Mammary epithelial cell (primary cell): ENCODE measurements at regions of chr11 and their contacts with region 1.

Region 1: DNA sequence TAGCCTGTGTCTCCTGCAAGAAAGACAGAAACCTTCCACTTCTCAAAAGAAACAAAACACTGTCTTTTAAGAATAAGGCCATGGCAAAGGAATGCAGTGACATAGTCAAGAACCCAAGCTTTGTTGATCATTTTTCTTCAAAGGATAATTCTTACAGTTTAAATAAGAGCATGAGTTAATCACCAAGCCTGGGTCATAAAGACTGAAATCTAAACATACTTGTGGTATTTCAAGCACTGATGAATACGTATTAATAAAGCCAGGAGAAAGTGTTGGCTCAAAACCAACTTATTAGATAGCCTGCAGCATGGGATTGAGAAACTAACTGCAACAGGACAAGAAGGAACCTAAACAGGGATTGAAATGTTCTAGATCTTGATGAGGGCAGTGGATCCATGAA is 143.3 kb upstream of the MTNR1B start:
- DNase-seq: peak; percentile 81
- H3K4me3 ChIP-seq: no peak overlapping the region
- H3K27ac ChIP-seq: no peak overlapping the region
- H3K4me1 ChIP-seq: peaks cover 12% of the 10 kb centered on the region
- H3K27me3 ChIP-seq: peaks cover 30% of the 10 kb centered on the region
- CTCF ChIP-seq: no peak

Region 2: GRCh38 chr11:92697461-92698312 is 128.4 kb before region 1 on chr11:
- CTCF ChIA-PET with region 1: no interaction called
- dilution Hi-C with region 1: no loop called
- in situ Hi-C with region 1: no loop called
- intact Hi-C with region 1: no loop called
- DNase-seq: no peak
- H3K4me3 ChIP-seq: no peak overlapping the region
- H3K27ac ChIP-seq: no peak overlapping the region
- H3K4me1 ChIP-seq: peaks cover 22% of the 10 kb centered on the region
- H3K27me3 ChIP-seq: no peaks in the 10 kb centered on the region
- CTCF ChIP-seq: no peak

Region 3: GRCh38 chr11:92735039-92735438 is 91.1 kb before region 1 on chr11:
- CTCF ChIA-PET with region 1: no interaction called
- dilution Hi-C with region 1: no loop called
- in situ Hi-C with region 1: no loop called
- intact Hi-C with region 1: loop called (anchors 5 kb)
- DNase-seq: no peak
- H3K4me3 ChIP-seq: no peak overlapping the region
- H3K27ac ChIP-seq: no peak overlapping the region
- H3K4me1 ChIP-seq: no peaks in the 10 kb centered on the region
- H3K27me3 ChIP-seq: peaks cover 8% of the 10 kb centered on the region
- CTCF ChIP-seq: peak; percentile 55 to 65

Region 4: DNA sequence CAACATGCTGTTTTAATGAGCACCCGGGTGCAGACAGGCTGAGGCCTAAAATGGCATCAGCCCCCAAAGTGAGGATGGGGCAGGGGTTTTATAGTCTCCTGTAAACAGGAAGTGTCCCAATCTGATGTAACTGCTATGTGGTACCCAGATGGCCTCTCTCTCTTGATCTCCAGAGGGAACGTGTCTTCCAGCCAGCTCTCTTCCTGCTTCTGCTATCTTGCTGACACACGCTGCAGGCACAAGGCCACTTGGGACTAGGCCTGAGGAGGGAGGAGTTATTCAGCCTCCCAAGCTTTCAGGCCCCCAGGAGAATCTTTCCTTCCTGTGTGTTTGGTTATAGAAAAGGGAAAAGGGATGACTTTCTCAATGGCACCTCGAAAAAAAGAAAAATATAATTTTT is 1035.7 kb after region 1 on chr11:
- CTCF ChIA-PET with region 1: no interaction called
- dilution Hi-C with region 1: no loop called
- in situ Hi-C with region 1: no loop called
- intact Hi-C with region 1: no loop called
- DNase-seq: no peak
- H3K4me3 ChIP-seq: no peak overlapping the region
- H3K27ac ChIP-seq: no peak overlapping the region
- H3K4me1 ChIP-seq: no peaks in the 10 kb centered on the region
- H3K27me3 ChIP-seq: no peaks in the 10 kb centered on the region
- CTCF ChIP-seq: no peak